ENCODE measurements at regions of chr11 and their contacts with region 1.

Region 1: GRCh38 chr11:86955361-86956120 is at the start of gene FZD4:
- DNase-seq: peak; percentile 96 to 99
- H3K4me3 ChIP-seq: peak within 1 kb of the TSS; percentile 94
- H3K4me3 Mint-ChIP-seq: peak within 1 kb of the TSS; percentile 93
- H3K27ac Mint-ChIP-seq: peak within 1 kb of the TSS; percentile 90
- H3K4me1 ChIP-seq: peaks cover 15% of the 10 kb centered on the region
- H3K4me1 Mint-ChIP-seq: peaks cover 22% of the 10 kb centered on the region
- H3K27me3 ChIP-seq: no peaks in the 10 kb centered on the region
- H3K27me3 Mint-ChIP-seq: no peaks in the 10 kb centered on the region
- CTCF ChIP-seq: peak; percentile 5 to 64
- total RNA-seq, gene FZD4: 60.6 and 78.4 TPM in 2 replicates

Region 2: DNA sequence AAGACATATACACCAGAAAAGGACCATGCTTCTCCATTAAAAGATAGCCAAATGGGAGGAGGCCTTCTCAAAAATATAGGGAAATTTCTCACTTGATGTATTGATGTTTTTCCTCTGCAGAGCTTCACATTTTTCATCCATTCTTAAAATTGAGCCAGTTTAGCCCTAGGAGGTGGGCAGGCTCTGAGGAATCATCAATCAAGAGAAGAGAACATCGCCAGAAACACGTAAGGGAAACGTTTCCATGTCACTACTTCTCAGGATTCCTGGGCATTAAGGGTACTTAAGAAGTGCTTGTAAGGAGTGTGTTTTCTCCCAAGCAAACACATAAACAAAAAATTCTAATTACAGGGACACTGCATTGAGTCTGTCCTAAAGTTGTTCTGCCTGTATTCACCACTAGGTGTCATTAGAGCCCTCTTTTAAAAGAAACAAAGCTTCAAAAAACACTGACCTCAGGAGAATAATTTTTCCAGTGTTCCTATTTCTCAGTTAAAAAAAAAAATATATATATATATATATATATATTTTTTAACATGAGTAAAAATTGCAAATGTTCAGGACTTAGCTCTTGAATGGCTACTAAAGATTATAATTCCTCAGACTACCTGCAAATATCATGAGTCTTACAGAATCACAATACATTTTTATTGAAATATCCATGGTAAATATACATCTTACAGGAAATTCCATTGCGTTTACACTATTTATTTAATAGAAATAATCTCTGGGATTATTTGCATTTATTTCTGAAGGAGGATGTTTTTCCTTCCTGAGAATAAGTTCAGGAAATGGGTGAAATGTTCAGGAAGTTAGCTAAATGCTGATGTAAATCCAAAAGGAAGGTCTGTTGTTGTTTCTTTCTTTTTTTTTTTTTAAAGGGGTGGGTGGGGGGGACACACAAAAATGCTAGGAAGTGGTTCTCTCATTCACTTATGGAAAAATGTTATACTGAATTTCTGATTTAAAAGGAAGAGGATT is 16.4 kb before region 1 on chr11:
- CTCF ChIA-PET with region 1: interaction called, 64 read pairs
- POLR2A ChIA-PET with region 1: interaction called, 23 read pairs
- intact Hi-C with region 1: loop called (anchors 1 kb)
- DNase-seq: peak in 1 of 2 experiments; percentile 75
- H3K4me3 ChIP-seq: no peak overlapping the region
- H3K4me3 Mint-ChIP-seq: peak overlapping the region; percentile 60
- H3K27ac Mint-ChIP-seq: peak overlapping the region; percentile 84
- H3K4me1 ChIP-seq: peaks cover 51% of the 10 kb centered on the region
- H3K4me1 Mint-ChIP-seq: peaks cover 52% of the 10 kb centered on the region
- H3K27me3 ChIP-seq: no peaks in the 10 kb centered on the region
- H3K27me3 Mint-ChIP-seq: no peaks in the 10 kb centered on the region
- CTCF ChIP-seq: peak; percentile 79 to 83

Region 3: DNA sequence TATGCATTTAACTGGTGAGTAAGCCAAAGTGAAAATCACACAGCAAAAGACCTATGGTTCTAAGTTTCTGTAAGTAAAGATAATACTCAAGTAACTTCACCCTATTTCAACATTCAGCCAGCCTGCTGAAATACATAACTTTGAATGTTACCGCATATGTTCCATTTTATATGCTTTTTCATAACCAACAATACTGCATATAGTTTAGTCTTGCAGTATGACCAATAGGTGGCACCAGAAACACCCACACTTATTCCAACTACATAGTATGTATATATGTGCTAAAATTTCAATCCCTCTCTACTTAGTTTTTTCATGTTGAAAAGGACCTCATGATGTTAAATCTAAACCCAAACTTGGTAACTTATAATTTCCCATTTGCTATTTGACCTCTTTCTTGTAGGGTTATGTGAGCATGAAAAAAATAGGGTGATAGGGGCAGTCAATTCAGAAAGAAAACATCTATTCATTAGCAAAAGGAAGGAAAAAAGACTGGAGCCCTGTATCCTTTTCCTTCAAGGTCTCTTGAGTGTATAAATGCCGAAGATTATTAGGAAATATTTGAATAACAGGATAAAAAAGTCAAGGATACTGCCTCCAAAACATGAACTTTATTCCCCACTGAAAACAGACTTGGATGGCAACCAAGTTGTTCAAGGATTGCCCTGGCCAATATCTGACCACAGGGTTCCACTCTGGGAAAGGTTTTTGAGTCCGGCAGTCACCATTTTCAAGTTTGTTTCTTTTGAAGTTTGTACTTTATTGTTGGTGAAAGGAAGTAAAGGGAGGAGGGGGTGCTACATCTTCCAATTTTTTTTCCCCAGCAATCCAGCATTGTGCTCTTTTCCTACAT is 23.4 kb after region 1 on chr11:
- CTCF ChIA-PET with region 1: interaction called, 5 read pairs
- POLR2A ChIA-PET with region 1: interaction called, 10 read pairs
- intact Hi-C with region 1: no loop called
- DNase-seq: peak in 1 of 2 experiments; percentile 61
- H3K4me3 ChIP-seq: no peak overlapping the region
- H3K4me3 Mint-ChIP-seq: no peak overlapping the region
- H3K27ac Mint-ChIP-seq: no peak overlapping the region
- H3K4me1 ChIP-seq: peaks cover 10% of the 10 kb centered on the region
- H3K4me1 Mint-ChIP-seq: peaks cover 31% of the 10 kb centered on the region
- H3K27me3 ChIP-seq: no peaks in the 10 kb centered on the region
- H3K27me3 Mint-ChIP-seq: no peaks in the 10 kb centered on the region
- CTCF ChIP-seq: peak; percentile 84 to 87

Region 4: GRCh38 chr11:87030458-87031054 is 75.0 kb after region 1 on chr11:
- CTCF ChIA-PET with region 1: interaction called, 14 read pairs
- POLR2A ChIA-PET with region 1: no interaction called
- intact Hi-C with region 1: loop called (anchors 1 kb)
- DNase-seq: peak in 1 of 2 experiments; percentile 47
- H3K4me3 ChIP-seq: no peak overlapping the region
- H3K4me3 Mint-ChIP-seq: no peak overlapping the region
- H3K27ac Mint-ChIP-seq: no peak overlapping the region
- H3K4me1 ChIP-seq: peaks cover 25% of the 10 kb centered on the region
- H3K4me1 Mint-ChIP-seq: peaks cover 34% of the 10 kb centered on the region
- H3K27me3 ChIP-seq: no peaks in the 10 kb centered on the region
- H3K27me3 Mint-ChIP-seq: no peaks in the 10 kb centered on the region
- CTCF ChIP-seq: no peak

Region 5: DNA sequence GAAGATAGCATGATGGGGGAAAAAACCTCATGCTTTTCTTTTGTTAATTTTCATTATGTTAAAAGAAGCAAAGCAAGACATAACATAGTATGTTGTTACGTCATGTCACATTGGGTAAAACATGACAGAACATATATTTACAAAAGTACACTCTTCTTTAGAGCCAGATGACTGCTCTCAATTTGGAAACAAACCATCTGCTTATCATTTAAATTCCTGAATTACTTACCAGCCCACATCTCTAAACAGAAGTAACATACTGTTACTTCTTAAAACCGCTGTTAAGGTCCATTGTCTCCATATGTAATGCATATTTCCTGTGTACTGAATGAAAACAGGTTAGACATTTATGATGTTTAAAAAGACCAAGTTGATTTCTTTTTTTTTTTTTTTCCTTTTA is 182.2 kb after region 1 on chr11:
- CTCF ChIA-PET with region 1: no interaction called
- POLR2A ChIA-PET with region 1: no interaction called
- intact Hi-C with region 1: no loop called
- DNase-seq: no peak
- H3K4me3 ChIP-seq: no peak overlapping the region
- H3K4me3 Mint-ChIP-seq: no peak overlapping the region
- H3K27ac Mint-ChIP-seq: no peak overlapping the region
- H3K4me1 ChIP-seq: no peaks in the 10 kb centered on the region; the same call in 1 of the 2 replicates
- H3K4me1 Mint-ChIP-seq: no peaks in the 10 kb centered on the region
- H3K27me3 ChIP-seq: no peaks in the 10 kb centered on the region
- H3K27me3 Mint-ChIP-seq: no peaks in the 10 kb centered on the region
- CTCF ChIP-seq: no peak

Region 6: GRCh38 chr11:87290304-87290922 is 334.9 kb after region 1 on chr11:
- CTCF ChIA-PET with region 1: no interaction called
- POLR2A ChIA-PET with region 1: no interaction called
- intact Hi-C with region 1: loop called (anchors 1 kb)
- DNase-seq: peak in 1 of 2 experiments; percentile 76
- H3K4me3 ChIP-seq: no peak overlapping the region
- H3K4me3 Mint-ChIP-seq: no peak overlapping the region
- H3K27ac Mint-ChIP-seq: no peak overlapping the region
- H3K4me1 ChIP-seq: no peaks in the 10 kb centered on the region
- H3K4me1 Mint-ChIP-seq: peaks cover 5% of the 10 kb centered on the region
- H3K27me3 ChIP-seq: no peaks in the 10 kb centered on the region
- H3K27me3 Mint-ChIP-seq: no peaks in the 10 kb centered on the region
- CTCF ChIP-seq: peak; percentile 78 to 84